MCF 10A (cell line): ENCODE measurements at regions of chr3 and their contacts with region 1.

Region 1: GRCh38 chr3:114623420-114624046 is 329.7 kb downstream of the TIGIT start:
- DNase-seq: no peak
- H3K4me3 Mint-ChIP-seq: no peak overlapping the region
- H3K27ac Mint-ChIP-seq: peak overlapping the region; percentile 82
- H3K4me1 Mint-ChIP-seq: peaks cover 20% of the 10 kb centered on the region
- H3K27me3 Mint-ChIP-seq: no peaks in the 10 kb centered on the region
- CTCF ChIP-seq: no peak

Region 2: DNA sequence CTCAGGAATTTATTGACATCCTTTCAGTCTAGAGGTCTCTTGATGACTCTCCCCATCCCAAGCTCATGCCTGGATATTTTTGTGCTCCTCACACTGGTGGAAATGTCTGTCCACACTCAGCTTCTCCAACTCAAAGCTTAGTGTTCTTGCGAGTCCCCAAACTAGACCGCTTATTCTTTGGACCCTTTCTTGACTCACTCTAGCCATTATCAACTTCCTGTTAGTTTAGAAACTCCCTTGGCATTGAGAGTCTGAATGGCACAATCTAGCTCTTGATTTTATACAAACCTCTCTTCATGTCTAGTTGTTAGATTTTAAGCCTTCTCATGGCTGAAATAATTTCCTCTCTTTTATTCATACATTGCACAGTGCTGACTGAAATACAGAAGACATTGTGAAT is 310.1 kb before region 1 on chr3:
- CTCF ChIA-PET with region 1: interaction called, 10 read pairs
- POLR2A ChIA-PET with region 1: no interaction called
- intact Hi-C with region 1: no loop called
- DNase-seq: no peak
- H3K4me3 Mint-ChIP-seq: no peak overlapping the region
- H3K27ac Mint-ChIP-seq: no peak overlapping the region
- H3K4me1 Mint-ChIP-seq: no peaks in the 10 kb centered on the region
- H3K27me3 Mint-ChIP-seq: no peaks in the 10 kb centered on the region
- CTCF ChIP-seq: no peak

Region 3: DNA sequence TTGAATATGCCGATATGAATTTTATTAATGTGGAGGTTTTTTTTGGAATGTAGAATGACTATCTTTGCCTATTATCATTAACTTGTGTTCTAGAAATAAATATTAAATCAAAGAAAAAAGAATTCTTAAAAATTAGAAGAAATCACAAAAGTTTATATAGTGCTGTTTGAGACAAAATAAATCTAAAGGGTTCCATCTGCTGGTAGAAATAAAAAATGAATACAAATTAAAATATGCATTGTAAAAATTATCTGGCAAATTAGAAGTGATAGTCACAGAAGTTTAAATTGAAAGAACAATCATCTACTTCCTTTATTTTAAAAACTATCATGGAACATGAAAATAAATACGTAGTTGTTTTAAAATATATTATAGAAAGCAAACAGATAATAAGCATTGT is 546.3 kb after region 1 on chr3:
- CTCF ChIA-PET with region 1: no interaction called
- POLR2A ChIA-PET with region 1: no interaction called
- intact Hi-C with region 1: no loop called
- DNase-seq: no peak
- H3K4me3 Mint-ChIP-seq: no peak overlapping the region
- H3K27ac Mint-ChIP-seq: no peak overlapping the region
- H3K4me1 Mint-ChIP-seq: no peaks in the 10 kb centered on the region
- H3K27me3 Mint-ChIP-seq: no peaks in the 10 kb centered on the region
- CTCF ChIP-seq: peak; percentile 30